K562 (cell line): ENCODE measurements at regions of chr9 and their contacts with region 1.

Region 1: DNA sequence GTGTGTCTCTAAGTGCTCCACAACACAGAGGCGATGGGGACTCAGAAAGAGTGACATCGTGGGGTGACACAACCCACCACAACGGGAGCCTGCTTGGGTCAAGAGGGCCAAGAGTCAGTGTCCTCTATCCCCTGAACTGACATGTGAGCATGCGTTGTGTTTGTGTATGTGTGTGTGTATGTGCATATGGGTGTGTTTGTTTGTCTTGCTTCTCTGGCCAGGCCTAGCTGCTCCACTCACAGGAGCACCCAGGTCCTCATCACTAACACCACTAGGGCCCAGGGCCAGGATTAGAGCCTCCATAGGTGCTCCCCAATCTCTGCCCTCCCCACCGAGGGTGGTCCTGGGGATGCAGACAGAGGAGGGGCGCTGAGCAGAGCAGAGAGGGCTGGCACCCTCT is 115.0 kb upstream of the CTSV start:
- DNase-seq: no peak
- ATAC-seq: no peak
- H3K4me3 ChIP-seq: no peak overlapping the region
- H3K27ac ChIP-seq: no peak overlapping the region
- H3K4me1 ChIP-seq: no peaks in the 10 kb centered on the region
- H3K27me3 ChIP-seq: peaks cover 0 to 5% of the 10 kb centered on the region in 2 experiments; a peak in 1 of 5 replicates
- CTCF ChIP-seq: no peak
- EP300 ChIP-seq: no peak
- POLR2A ChIP-seq: no peak
- RAD21 ChIP-seq: no peak

Region 2: GRCh38 chr9:97386733-97387503 is 233.0 kb after region 1 on chr9:
- CTCF ChIA-PET with region 1: no interaction called
- POLR2A ChIA-PET with region 1: no interaction called
- in situ Hi-C with region 1: no loop called
- intact Hi-C with region 1: loop called (anchors 10 kb)
- DNase-seq: peak; percentile 80 to 86 (median 86)
- ATAC-seq: peak; percentile 88
- H3K4me3 ChIP-seq: peak overlapping the region; percentile 8; the same call in 1 of the 2 replicates
- H3K27ac ChIP-seq: no peak overlapping the region
- H3K4me1 ChIP-seq: peaks cover 5 to 15% of the 10 kb centered on the region in 2 experiments; a peak in 3 of 5 replicates
- H3K27me3 ChIP-seq: peaks cover 0 to 14% of the 10 kb centered on the region in 2 experiments; a peak in 3 of 5 replicates
- CTCF ChIP-seq: peak; percentile 91 to 99 (median 92)
- EP300 ChIP-seq: no peak
- POLR2A ChIP-seq: no peak
- RAD21 ChIP-seq: peak; percentile 50 to 83